Activated naive CD4-positive, alpha-beta T cell treated with anti-CD3 and anti-CD28 coated beads for 36 hours (primary cell): ENCODE measurements at regions of chr21 and their contacts with region 1.

Region 1: GRCh38 chr21:26389971-26390641 is 183.0 kb downstream of the CYYR1 start:
- DNase-seq: no peak
- H3K4me3 Mint-ChIP-seq: no peak overlapping the region
- H3K27ac Mint-ChIP-seq: no peak overlapping the region
- H3K4me1 Mint-ChIP-seq: no peaks in the 10 kb centered on the region
- H3K27me3 Mint-ChIP-seq: peaks cover 5% of the 10 kb centered on the region

Region 2: DNA sequence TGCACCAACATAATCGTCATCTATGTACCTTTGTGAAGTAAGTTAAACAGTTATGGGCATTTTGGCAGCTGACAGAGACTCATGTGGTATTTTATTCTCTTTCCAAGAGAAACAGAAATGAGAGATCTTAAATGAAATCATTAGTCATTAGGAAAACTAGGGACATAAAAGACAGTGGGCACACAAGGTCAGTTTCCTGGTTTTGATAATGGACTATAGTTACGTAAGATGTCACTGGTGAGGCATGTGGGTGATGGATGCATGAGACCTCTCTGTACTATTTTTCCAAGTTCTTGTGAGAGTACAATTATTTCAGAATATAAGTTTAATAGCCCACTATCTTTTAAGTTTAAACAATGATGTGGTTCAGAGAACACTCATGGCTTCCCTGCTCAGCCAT is 436.4 kb before region 1 on chr21:
- CTCF ChIA-PET with region 1: no interaction called
- intact Hi-C with region 1: loop called (anchors 5 kb)
- DNase-seq: no peak
- H3K4me3 Mint-ChIP-seq: no peak overlapping the region
- H3K27ac Mint-ChIP-seq: no peak overlapping the region
- H3K4me1 Mint-ChIP-seq: no peaks in the 10 kb centered on the region
- H3K27me3 Mint-ChIP-seq: no peaks in the 10 kb centered on the region

Region 3: GRCh38 chr21:26351661-26352060 is 38.4 kb before region 1 on chr21:
- CTCF ChIA-PET with region 1: no interaction called
- intact Hi-C with region 1: no loop called
- DNase-seq: no peak
- H3K4me3 Mint-ChIP-seq: no peak overlapping the region
- H3K27ac Mint-ChIP-seq: no peak overlapping the region
- H3K4me1 Mint-ChIP-seq: no peaks in the 10 kb centered on the region
- H3K27me3 Mint-ChIP-seq: peaks cover 8% of the 10 kb centered on the region